Ovary (tissue), 10 donors: ENCODE measurements at regions of chr17 and their contacts with region 1.

Region 1: DNA sequence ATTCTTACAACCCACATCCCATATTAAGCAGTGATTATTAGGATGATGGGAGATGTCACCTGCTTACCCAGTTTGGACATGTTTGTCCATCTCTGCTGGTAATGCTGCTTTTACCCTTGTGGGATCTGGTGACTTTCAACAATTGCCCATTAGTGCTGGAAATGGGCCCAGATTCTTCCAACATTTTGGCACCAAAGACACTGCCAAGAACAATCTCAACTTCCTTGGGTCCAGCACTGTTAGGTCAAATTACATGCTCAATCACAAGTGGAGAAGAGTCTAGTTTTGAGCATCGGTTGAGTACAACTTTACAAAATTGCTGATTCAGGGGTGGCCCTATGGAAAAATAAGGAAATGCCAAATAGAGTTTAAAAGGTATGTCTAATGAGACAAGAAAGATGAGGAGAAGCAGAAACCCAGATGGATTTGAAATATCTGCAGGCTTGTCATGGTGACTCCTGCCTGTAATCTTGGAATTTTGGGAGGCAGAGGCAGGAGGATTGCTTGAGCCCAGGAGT is 13.0 kb upstream of the ZFP3 start:
- DNase-seq: no peak
- H3K4me3 ChIP-seq: no peak overlapping the region
- H3K27ac ChIP-seq: no peak overlapping the region
- H3K4me1 ChIP-seq: no peaks in the 10 kb centered on the region
- H3K27me3 ChIP-seq: no peaks in the 10 kb centered on the region
- CTCF ChIP-seq: no peak
- EP300 ChIP-seq: no peak
- POLR2A ChIP-seq: no peak

Region 2: DNA sequence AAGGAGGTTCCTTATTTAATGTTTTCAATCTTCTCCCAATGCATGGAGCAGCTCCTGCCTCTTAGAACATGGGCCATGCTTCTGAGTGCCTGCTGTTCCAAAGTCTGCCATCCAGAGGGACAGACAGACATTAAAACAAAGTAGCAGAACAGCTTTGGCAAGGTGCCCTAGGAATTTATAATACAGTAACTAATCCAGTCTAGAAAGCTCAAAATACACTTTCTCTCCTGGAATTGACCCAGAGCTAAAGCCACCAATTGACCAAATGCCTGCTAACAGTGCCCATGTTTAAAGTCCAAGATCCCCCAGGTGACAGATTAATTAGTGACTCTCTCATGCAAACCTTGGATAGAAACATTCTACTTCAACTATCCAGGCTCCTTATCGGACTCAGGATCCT is 151.3 kb before region 1 on chr17:
- intact Hi-C with region 1: loop called in 2 of 4 experiments (anchors 5 to 10 kb)
- DNase-seq: no peak
- H3K4me3 ChIP-seq: no peak overlapping the region
- H3K27ac ChIP-seq: no peak overlapping the region
- H3K4me1 ChIP-seq: no peaks in the 10 kb centered on the region
- H3K27me3 ChIP-seq: no peaks in the 10 kb centered on the region
- CTCF ChIP-seq: no peak
- EP300 ChIP-seq: no peak
- POLR2A ChIP-seq: no peak

Region 3: DNA sequence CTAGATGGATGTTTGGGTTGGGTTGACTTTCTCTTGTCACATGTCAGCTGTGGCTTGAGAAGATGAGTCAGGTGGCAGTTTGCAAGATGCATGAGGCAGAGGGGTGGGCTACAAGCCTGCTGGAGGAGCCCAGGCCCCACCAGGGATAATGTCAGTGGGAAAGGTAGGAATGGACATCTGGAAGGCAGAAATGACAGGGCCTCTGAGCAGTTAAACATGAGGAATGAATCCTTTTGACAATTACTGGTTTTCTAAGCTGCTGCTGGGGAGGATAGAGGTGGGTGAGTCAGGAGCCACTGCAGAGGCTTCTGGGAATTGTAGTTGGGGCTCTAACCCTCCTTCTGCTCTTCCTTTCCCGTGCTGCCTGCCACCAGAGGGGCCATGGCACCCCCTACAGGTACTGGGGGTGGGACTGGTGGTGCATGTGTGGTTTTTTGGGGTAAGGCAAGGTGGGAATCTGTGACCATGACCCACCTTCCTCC is 45.8 kb before region 1 on chr17:
- intact Hi-C with region 1: loop called in 1 of 4 experiments (anchors 10 kb)
- DNase-seq: no peak
- H3K4me3 ChIP-seq: no peak overlapping the region
- H3K27ac ChIP-seq: no peak overlapping the region
- H3K4me1 ChIP-seq: no peaks in the 10 kb centered on the region
- H3K27me3 ChIP-seq: no peaks in the 10 kb centered on the region
- CTCF ChIP-seq: no peak
- EP300 ChIP-seq: no peak
- POLR2A ChIP-seq: no peak